Heart left ventricle (tissue), 16 donors: ENCODE measurements at regions of chr11 and their contacts with region 1.

Region 1: GRCh38 chr11:28457486-28458145 is 349.4 kb downstream of the METTL15 start:
- DNase-seq: no peak
- ATAC-seq: no peak
- H3K4me3 ChIP-seq: no peak overlapping the region
- H3K27ac ChIP-seq: no peak overlapping the region
- H3K4me1 ChIP-seq: no peaks in the 10 kb centered on the region
- H3K27me3 ChIP-seq: no peaks in the 10 kb centered on the region
- CTCF ChIP-seq: no peak
- POLR2A ChIP-seq: no peak

Region 2: GRCh38 chr11:28417601-28418323 is 39.9 kb before region 1 on chr11:
- intact Hi-C with region 1: loop called in 1 of 10 experiments (anchors 5 kb)
- DNase-seq: no peak
- ATAC-seq: peak in 1 of 4 donors; percentile 80
- H3K4me3 ChIP-seq: no peak overlapping the region
- H3K27ac ChIP-seq: no peak overlapping the region
- H3K4me1 ChIP-seq: peaks cover 0 to 14% (median 0%) of the 10 kb centered on the region in 12 donors
- H3K27me3 ChIP-seq: no peaks in the 10 kb centered on the region
- CTCF ChIP-seq: no peak
- POLR2A ChIP-seq: no peak

Region 3: DNA sequence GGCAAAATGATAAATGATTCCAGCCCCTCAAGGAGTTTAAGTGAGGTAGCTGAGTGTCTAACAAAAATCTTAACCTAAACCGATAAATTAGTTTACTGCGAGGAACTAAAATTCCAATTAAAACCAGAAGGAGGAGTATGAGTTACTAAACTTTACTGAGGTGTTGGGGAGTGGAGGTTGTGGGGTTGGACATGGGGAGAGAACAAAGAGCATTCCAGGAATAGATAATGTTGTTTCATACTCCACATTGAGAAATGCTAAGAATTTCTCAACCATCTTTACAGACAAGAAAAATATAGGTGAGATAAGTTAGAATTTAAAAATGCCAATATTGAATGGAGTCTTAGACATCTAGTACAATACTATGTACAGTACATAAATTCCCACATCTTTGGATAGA is 139.2 kb after region 1 on chr11:
- intact Hi-C with region 1: no loop called
- DNase-seq: no peak
- ATAC-seq: no peak
- H3K4me3 ChIP-seq: no peak overlapping the region
- H3K27ac ChIP-seq: no peak overlapping the region
- H3K4me1 ChIP-seq: no peaks in the 10 kb centered on the region
- H3K27me3 ChIP-seq: no peaks in the 10 kb centered on the region
- CTCF ChIP-seq: no peak
- POLR2A ChIP-seq: no peak